MCF 10A (cell line): ENCODE measurements at regions of chr1 and their contacts with region 1.

Region 1: GRCh38 chr1:161071886-161072371 is 2.2 kb upstream of the ARHGAP30 start:
- DNase-seq: peak; percentile 73
- H3K4me3 Mint-ChIP-seq: peak overlapping the region; percentile 90
- H3K27ac Mint-ChIP-seq: peak overlapping the region; percentile 46
- H3K4me1 Mint-ChIP-seq: peaks cover 51% of the 10 kb centered on the region
- H3K27me3 Mint-ChIP-seq: no peaks in the 10 kb centered on the region
- CTCF ChIP-seq: peak; percentile 87

Region 2: GRCh38 chr1:160085686-160086455 is 986.1 kb before region 1 on chr1:
- CTCF ChIA-PET with region 1: no interaction called
- POLR2A ChIA-PET with region 1: no interaction called
- intact Hi-C with region 1: no loop called
- DNase-seq: peak; percentile 82
- H3K4me3 Mint-ChIP-seq: no peak overlapping the region
- H3K27ac Mint-ChIP-seq: no peak overlapping the region
- H3K4me1 Mint-ChIP-seq: peaks cover 5% of the 10 kb centered on the region
- H3K27me3 Mint-ChIP-seq: peaks cover 24% of the 10 kb centered on the region
- CTCF ChIP-seq: peak; percentile 96

Region 3: DNA sequence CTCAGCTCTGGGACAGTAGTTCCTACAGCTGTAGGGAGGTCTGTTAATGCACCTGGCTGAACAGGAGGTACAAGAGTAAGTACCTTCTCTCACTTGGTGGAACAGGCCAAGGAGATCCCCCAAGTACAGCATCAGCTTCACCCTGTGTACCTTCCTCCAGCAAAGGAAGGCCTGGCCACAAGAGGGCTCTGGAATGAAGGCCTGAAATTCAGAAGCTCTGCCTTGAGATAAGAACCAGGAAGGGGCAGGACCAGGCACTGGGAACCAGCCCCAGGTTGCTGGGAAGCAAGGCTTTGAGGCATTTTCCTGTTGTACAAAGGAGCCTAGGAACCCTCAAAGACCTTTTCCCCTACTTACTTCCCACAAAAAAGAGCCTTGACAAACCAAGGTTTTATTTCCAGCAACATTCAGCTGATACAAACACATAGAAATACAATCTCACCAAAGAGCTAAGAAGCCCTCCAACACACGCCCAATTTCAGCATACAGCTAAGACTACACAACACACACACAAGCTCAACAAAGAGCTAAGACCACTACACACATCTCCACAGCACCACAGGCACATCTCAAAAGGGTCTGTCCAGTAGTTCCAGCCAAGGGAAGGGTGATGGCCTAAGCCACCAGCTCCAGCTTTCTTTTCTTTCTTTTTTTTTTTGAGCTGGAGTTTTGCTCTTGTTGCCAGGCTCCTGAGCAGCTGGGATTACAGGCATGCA is 74.4 kb before region 1 on chr1:
- CTCF ChIA-PET with region 1: interaction called, 15 read pairs
- POLR2A ChIA-PET with region 1: interaction called, 4 read pairs
- intact Hi-C with region 1: loop called (anchors 1 kb)
- DNase-seq: peak; percentile 74
- H3K4me3 Mint-ChIP-seq: no peak overlapping the region
- H3K27ac Mint-ChIP-seq: no peak overlapping the region
- H3K4me1 Mint-ChIP-seq: peaks cover 35% of the 10 kb centered on the region
- H3K27me3 Mint-ChIP-seq: no peaks in the 10 kb centered on the region
- CTCF ChIP-seq: peak; percentile 44

Region 4: DNA sequence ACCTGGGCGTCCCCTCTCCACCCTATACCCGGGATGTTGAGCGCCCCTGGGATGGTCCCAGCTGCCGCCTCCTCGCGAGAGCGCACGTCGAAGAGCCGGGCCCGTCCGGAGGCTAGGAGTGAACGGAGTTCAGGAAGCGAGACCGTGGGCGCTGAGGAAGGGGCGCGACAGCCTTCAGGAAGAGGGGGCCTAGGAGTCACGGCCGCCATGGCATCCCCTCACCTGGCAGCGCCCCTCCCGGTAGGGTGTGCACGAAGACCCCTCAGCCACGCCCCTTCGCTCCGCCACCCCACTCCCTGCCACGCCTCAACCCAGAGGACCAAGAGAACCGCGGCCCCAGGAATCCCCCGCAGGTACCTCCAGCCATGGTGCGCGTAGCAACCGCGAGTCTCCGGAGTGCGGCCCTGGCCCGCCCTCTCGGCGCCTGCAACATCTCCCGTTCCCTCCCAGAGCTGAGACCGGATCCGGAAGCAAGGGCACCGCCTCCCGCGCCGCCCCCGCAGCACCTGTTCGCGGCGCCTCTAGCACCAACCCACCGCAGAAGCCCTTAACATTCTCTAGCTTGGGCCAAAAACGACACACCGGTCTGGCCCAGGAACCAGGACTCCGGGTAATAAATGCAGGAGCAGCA is 33.3 kb before region 1 on chr1 and contains the start of gene TSTD1:
- CTCF ChIA-PET with region 1: interaction called, 53 read pairs
- POLR2A ChIA-PET with region 1: interaction called, 122 read pairs
- intact Hi-C with region 1: no loop called
- DNase-seq: peak; percentile 76
- H3K4me3 Mint-ChIP-seq: peak within 1 kb of the TSS; percentile 81
- H3K27ac Mint-ChIP-seq: peak within 1 kb of the TSS; percentile 76
- H3K4me1 Mint-ChIP-seq: peaks cover 17% of the 10 kb centered on the region
- H3K27me3 Mint-ChIP-seq: no peaks in the 10 kb centered on the region
- CTCF ChIP-seq: no peak
- total RNA-seq, gene TSTD1: 35.2 and 48.0 TPM in 2 replicates

Region 5: DNA sequence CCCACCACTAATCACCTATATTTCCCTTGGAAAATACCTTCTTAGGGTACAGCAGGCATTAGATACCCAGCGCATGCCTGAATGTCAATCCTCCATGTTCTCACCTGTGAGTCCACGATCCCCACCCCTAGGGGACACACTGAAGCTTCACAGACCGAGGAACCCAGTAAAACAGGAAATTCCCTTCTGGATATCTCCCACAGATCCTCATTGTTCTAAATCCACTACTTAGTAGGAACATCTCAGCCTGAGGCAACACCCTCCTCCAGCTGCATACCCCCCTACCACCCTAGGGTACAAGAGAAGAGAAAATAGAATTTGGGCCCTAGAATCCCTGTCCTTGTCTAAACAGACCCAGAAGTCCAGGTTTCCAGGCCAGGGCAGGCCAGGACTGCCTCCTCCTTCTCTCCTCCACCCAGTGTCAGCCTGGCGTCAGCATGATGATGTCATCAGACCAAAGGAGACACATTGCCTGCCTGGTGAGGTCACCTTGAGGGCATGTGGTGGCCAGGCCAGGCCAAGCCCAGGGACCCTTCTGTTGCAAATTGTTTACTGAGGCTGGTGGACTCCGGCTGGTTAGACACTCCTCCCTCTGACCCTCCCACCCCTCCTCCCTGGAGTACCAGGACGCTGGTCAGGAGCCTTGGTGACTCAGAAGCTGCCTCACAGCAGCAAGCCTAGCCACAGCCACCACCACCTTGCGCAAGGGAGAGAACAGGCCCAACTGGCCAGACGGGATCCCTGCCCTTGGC is 11.2 kb after region 1 on chr1:
- CTCF ChIA-PET with region 1: interaction called, 47 read pairs
- POLR2A ChIA-PET with region 1: interaction called, 29 read pairs
- intact Hi-C with region 1: loop called (anchors 1 kb)
- DNase-seq: peak; percentile 98
- H3K4me3 Mint-ChIP-seq: peak overlapping the region; percentile 4
- H3K27ac Mint-ChIP-seq: peak overlapping the region; percentile 90
- H3K4me1 Mint-ChIP-seq: peaks cover 73% of the 10 kb centered on the region
- H3K27me3 Mint-ChIP-seq: no peaks in the 10 kb centered on the region
- CTCF ChIP-seq: no peak

Region 6: GRCh38 chr1:161132410-161133219 is 60.7 kb after region 1 on chr1 and contains the start of gene DEDD:
- CTCF ChIA-PET with region 1: interaction called, 15 read pairs
- POLR2A ChIA-PET with region 1: interaction called, 17 read pairs
- intact Hi-C with region 1: loop called (anchors 2 kb)
- DNase-seq: peak; percentile 99
- H3K4me3 Mint-ChIP-seq: no peak within 1 kb of the TSS
- H3K27ac Mint-ChIP-seq: no peak within 1 kb of the TSS
- H3K4me1 Mint-ChIP-seq: peaks cover 23% of the 10 kb centered on the region
- H3K27me3 Mint-ChIP-seq: no peaks in the 10 kb centered on the region
- CTCF ChIP-seq: no peak
- total RNA-seq, gene DEDD: 63.1 and 73.6 TPM in 2 replicates

Region 7: DNA sequence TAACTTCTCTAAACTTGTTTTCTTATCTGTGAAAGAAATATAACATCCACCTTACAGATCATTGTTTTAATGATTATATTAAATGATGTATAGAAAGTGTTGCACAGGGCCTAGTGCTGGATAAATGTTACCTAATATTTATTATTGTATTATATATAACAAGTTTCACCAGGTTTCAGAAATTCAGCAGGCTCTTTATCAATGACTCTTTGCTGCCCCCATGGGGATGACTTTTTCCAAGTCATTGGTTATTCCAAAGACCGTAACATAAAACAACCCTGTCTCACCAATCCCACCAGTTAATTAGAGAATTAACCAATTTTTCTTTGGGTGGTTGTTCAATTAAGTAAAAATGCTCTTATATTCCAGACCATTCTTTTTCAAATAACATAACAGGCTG is 67.8 kb after region 1 on chr1:
- CTCF ChIA-PET with region 1: interaction called, 15 read pairs
- POLR2A ChIA-PET with region 1: interaction called, 3 read pairs
- intact Hi-C with region 1: no loop called
- DNase-seq: peak; percentile 77
- H3K4me3 Mint-ChIP-seq: no peak overlapping the region
- H3K27ac Mint-ChIP-seq: no peak overlapping the region
- H3K4me1 Mint-ChIP-seq: peaks cover 4% of the 10 kb centered on the region
- H3K27me3 Mint-ChIP-seq: no peaks in the 10 kb centered on the region
- CTCF ChIP-seq: peak; percentile 64

Region 8: DNA sequence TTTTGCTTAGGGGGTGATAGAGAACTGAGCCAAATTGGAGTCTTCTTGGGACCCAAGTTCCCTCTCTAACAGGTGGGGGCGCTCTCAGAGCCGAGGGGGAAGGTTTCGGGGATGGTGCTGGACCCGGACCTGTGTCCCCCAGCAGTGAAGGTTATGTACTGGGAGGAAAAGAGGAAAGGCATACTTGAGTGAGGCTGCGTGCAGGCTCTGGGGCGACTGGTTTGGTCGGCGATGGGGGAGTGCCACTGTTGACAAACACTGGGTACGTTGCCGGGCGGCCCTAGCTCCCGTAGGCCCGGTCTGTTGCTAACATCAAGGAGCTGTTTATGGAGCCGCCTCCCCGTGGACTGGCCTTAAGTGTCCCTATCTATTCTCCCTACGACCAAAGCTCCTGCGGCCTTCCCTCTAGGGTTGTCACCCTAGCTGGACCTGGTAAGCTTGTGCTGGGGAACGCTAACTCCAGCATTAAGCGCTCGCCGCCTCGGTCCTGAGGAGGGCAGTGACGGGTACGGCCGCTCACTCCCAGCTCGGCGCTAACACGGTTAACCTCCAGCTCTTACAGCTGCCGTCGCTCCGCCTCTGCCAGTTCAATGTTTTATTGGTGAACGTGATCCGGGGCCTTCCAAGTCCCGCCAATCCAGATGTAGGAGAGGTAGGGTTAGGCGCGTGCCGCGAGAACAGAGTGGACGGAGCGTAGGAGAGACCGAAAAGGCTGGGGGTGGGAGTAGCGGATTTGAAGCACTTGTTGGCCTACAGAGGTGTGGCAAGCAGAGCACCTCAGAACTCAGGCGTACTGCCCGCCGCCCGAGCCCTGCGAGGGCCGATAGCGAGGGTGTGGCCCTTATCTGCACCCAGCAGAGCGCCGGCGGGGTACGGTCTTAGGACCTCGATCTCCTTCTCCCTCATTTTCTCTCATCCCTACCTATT is 94.1 kb after region 1 on chr1 and contains the start of gene PPOX:
- CTCF ChIA-PET with region 1: interaction called, 4 read pairs
- POLR2A ChIA-PET with region 1: interaction called, 11 read pairs
- intact Hi-C with region 1: no loop called
- DNase-seq: peak; percentile 100
- H3K4me3 Mint-ChIP-seq: peak within 1 kb of the TSS; percentile 98
- H3K27ac Mint-ChIP-seq: peak within 1 kb of the TSS; percentile 100
- H3K4me1 Mint-ChIP-seq: peaks cover 47% of the 10 kb centered on the region
- H3K27me3 Mint-ChIP-seq: no peaks in the 10 kb centered on the region
- CTCF ChIP-seq: peak; percentile 36
- total RNA-seq, gene PPOX: 30.3 and 32.4 TPM in 2 replicates

Region 9: GRCh38 chr1:161706482-161707347 is 634.8 kb after region 1 on chr1 and contains the start of gene FCRLA:
- CTCF ChIA-PET with region 1: no interaction called
- POLR2A ChIA-PET with region 1: no interaction called
- intact Hi-C with region 1: no loop called
- DNase-seq: peak; percentile 80
- H3K4me3 Mint-ChIP-seq: no peak within 1 kb of the TSS
- H3K27ac Mint-ChIP-seq: no peak within 1 kb of the TSS
- H3K4me1 Mint-ChIP-seq: peaks cover 7% of the 10 kb centered on the region
- H3K27me3 Mint-ChIP-seq: no peaks in the 10 kb centered on the region
- CTCF ChIP-seq: no peak
- total RNA-seq, gene FCRLA: 0.30 and 0.47 TPM in 2 replicates